A673 (cell line): ENCODE measurements at regions of chr5 and their contacts with region 1.

Region 1: DNA sequence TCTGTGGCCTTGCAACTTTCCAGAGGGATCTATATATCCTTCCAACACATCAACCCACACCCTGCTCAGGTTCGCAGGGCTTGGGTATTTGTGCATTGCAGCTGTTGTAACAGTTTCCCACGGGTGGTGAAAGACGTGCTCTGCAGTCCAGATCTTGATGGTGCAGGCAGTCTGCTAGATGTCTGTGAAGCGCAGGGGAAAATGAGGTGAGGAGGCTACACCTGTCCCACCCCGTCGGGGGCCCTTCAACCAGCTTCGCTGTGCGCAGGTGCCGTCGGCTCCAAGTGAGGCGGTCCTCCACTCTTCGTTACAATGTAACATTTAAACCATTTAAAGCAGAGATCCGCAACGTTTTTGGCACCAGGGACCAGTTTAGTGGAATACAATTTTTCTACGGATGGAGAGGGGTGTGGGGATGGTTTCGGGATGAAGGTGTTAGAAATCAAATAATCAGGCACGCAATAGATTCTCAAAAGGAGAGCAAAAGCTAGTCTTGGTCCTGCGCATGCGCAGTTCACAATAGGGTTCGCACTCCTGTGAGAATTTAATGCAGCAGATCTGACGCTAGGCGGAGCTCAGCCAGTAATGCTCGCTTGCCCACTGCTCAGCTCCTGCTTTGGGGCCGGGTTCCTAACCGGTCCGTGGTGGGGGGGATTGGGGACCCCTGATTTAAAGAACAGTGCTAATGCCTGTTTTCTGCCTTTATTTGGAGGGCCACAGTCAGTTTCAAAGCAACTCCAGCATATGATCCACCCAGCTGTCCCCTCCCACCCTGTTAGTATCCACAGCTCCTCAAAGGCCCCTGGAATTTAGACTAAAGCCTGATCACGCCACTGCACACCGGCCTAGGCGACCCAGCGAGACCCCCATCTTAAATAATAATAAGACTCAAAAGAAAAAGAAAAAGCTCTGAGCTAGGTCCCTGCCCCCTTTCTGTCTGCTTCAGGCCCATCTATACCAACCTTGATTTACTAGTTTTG is 97.1 kb upstream of the SELENOP start:
- DNase-seq: peak; percentile 90
- H3K4me3 ChIP-seq: peak overlapping the region; percentile 45
- H3K27ac ChIP-seq: no peak overlapping the region
- H3K4me1 ChIP-seq: peaks cover 3% of the 10 kb centered on the region
- H3K27me3 ChIP-seq: peaks cover 15% of the 10 kb centered on the region
- CTCF ChIP-seq: peak; percentile 87

Region 2: DNA sequence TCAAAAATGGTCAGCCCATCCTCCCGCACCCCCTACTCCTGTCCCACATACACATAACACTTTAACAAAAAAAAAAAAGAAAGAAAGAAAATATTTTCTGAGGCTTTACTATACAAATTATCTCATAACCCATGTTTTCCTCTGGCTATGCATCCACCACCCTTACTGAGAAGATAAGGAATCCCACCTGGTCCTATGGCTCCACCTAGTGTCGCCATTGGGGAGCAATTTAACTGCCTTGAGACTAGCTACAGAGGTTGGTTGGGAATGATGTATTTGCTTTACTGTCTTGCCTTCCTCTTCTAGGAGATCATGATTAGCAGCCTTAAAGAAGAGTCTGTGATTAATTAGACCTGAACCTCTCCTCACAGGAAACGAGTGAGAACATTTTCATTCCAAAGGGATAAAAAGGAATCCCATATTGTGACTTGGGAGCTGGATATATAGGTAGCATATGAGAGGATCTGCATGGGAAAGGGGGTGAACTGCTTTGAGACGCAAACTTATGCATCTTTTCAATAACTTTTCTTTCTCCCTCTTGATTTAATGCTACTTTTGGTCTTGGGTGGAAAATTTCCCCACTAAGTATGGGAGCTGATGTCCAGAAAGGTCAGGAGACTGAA is 19.4 kb before region 1 on chr5:
- CTCF ChIA-PET with region 1: interaction called, 11 read pairs
- POLR2A ChIA-PET with region 1: no interaction called
- intact Hi-C with region 1: no loop called
- DNase-seq: peak; percentile 80
- H3K4me3 ChIP-seq: no peak overlapping the region
- H3K27ac ChIP-seq: no peak overlapping the region
- H3K4me1 ChIP-seq: no peaks in the 10 kb centered on the region
- H3K27me3 ChIP-seq: no peaks in the 10 kb centered on the region
- CTCF ChIP-seq: peak; percentile 93

Region 3: GRCh38 chr5:42994246-42995151 is 85.7 kb after region 1 on chr5:
- CTCF ChIA-PET with region 1: interaction called, 5 read pairs
- POLR2A ChIA-PET with region 1: no interaction called
- intact Hi-C with region 1: loop called (anchors 5 kb)
- DNase-seq: peak; percentile 96
- H3K4me3 ChIP-seq: peak overlapping the region; percentile 61
- H3K27ac ChIP-seq: peak overlapping the region; percentile 77
- H3K4me1 ChIP-seq: peaks cover 9% of the 10 kb centered on the region
- H3K27me3 ChIP-seq: no peaks in the 10 kb centered on the region
- CTCF ChIP-seq: peak; percentile 88

Region 4: GRCh38 chr5:43040287-43041098 is 131.7 kb after region 1 on chr5 and contains the start of gene ANXA2R:
- CTCF ChIA-PET with region 1: interaction called, 9 read pairs
- POLR2A ChIA-PET with region 1: no interaction called
- intact Hi-C with region 1: loop called (anchors 1 kb)
- DNase-seq: peak; percentile 97
- H3K4me3 ChIP-seq: peak within 1 kb of the TSS; percentile 62
- H3K27ac ChIP-seq: peak within 1 kb of the TSS; percentile 88
- H3K4me1 ChIP-seq: no peaks in the 10 kb centered on the region
- H3K27me3 ChIP-seq: no peaks in the 10 kb centered on the region
- CTCF ChIP-seq: peak; percentile 78
- total RNA-seq, gene ANXA2R: 1.4 and 1.9 TPM in 2 replicates

Region 5: GRCh38 chr5:43305948-43306565 is 397.3 kb after region 1 on chr5:
- CTCF ChIA-PET with region 1: no interaction called
- POLR2A ChIA-PET with region 1: interaction called, 3 read pairs
- intact Hi-C with region 1: loop called (anchors 5 kb)
- DNase-seq: peak; percentile 80
- H3K4me3 ChIP-seq: no peak overlapping the region
- H3K27ac ChIP-seq: no peak overlapping the region
- H3K4me1 ChIP-seq: peaks cover 44% of the 10 kb centered on the region
- H3K27me3 ChIP-seq: no peaks in the 10 kb centered on the region
- CTCF ChIP-seq: peak; percentile 85